ENCODE measurements at regions of chr18 and their contacts with region 1.

Region 1: GRCh38 chr18:31241900-31242409 is 76.0 kb upstream of the DSG1 start:
- DNase-seq: peak; percentile 81

Region 2: GRCh38 chr18:31042437-31043181 is 199.3 kb before region 1 on chr18 and contains the start of gene DSC3:
- CTCF ChIA-PET with region 1: no interaction called
- POLR2A ChIA-PET with region 1: interaction called, 12 read pairs
- DNase-seq: peak; percentile 72

Region 3: DNA sequence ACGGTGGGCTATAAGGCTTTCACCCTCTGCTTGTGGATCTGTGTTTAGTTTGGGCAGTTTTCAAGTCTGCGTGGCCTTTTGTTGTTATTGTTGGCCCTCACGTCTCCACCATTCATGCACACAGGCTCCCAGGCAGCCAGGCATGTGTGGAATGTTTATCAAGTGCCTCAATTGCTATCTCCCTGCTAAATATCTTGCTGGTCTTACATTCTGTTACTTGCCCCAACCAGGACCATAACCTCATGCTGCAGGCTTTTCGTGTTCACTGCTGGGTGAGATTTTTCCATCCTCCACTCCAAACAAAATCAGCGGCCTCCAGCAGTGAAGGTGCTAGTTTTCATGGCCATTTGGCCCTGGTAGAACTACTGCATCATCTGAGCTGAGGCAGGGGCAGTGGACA is 16.3 kb before region 1 on chr18:
- CTCF ChIA-PET with region 1: interaction called, 14 read pairs
- POLR2A ChIA-PET with region 1: no interaction called
- DNase-seq: no peak

Region 4: DNA sequence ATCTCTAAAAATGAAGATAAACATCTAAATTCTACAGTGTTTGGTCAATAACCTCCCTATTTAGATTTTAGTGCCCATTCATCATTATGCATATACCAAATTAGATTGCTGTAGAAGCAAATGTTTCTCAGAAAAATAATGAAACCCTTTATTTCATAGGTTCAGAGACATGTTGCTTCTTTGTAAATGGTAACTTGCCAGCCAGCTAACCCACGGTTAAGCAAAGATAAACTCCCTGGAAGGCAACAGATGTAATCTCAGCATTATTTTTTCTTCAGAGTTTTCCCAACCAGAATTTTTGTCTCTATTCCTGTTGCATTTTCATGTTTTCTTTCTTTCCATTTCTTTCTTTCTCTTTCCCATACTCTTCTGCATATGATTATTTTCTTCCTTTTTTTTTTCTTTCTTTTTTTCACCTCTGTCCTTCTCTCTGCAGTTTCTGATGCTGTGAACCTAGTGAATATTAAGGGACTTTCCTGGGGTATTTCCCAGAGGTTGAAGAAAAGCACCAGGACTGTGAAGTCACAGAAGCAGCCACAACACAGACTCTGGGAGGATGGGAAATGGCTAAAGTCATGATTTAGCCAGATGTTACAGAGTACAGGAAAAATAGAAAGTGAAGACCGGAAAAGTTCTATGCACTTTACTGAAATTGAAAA is 26.0 kb after region 1 on chr18:
- CTCF ChIA-PET with region 1: interaction called, 11 read pairs
- POLR2A ChIA-PET with region 1: no interaction called
- DNase-seq: no peak

Region 5: GRCh38 chr18:31278609-31279071 is 36.7 kb after region 1 on chr18:
- CTCF ChIA-PET with region 1: interaction called, 10 read pairs
- POLR2A ChIA-PET with region 1: no interaction called
- DNase-seq: no peak

Region 6: DNA sequence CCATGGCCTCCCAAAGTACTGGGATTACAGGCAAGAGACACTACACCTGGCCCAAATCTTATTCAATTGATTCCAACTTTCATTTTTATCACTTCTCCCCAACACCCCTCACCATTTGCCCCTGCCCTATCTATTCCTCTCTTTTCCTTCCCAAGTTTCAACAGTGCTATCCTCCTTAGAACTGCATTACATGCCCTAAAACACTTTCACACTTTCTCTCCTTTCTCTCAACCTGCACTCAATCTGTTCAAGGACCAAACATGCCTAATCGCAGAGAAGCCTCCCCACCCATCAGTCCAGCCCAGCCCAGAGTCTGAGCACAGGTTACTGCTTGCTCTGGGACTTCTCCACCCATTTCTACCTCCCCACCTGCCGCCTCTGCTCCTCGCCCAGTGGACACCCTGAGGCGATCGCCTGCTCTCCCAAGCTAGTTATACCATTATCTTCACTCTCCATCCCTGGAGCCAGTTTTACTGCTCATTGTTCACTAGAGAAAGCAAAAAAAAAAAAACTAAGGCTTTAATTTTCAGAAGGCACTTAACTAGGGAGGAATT is 52.3 kb after region 1 on chr18:
- CTCF ChIA-PET with region 1: no interaction called
- POLR2A ChIA-PET with region 1: no interaction called
- DNase-seq: no peak